CD4-positive, alpha-beta memory T cell (primary cell): ENCODE measurements at regions of chr4 and their contacts with region 1.

Region 1: DNA sequence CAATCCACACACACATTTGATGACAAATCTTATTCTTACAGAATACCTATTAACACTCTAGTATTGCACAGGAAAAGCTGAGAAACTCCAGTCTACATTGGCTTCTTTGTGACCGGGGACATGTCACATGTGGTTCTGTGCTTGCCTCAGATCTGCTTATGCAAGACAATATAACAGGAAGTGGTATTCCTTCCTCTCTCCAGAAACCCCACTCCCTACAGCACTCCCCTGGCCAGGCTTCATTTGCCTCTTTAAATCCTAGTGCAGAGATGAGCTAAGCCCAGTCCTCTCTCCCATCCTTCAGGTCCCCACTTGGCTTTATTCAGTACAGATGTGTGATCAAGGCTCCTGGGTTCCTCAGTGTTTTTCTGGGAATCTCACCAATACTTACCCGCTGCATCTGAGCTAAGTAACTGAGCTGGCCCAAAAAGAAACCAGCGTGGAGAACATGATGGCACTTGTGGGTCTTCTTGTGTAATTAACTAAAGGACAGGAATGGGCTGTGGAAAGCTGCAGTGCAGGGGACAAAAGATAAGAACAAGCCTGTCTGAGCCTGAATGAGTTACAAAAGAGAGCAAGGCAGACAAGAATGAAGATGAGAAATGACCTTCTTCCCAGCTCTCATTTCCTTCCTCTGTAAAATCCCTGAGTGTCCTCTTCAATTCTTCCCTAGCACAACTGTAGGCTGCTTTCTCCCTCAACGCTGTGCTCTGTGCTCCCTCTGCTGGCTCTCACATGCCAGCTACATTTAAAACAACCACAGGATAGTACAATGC is 105.6 kb downstream of the HNRNPD start:
- DNase-seq: peak; percentile 41 to 52 (median 47)
- H3K4me3 ChIP-seq: no peak overlapping the region
- H3K4me3 Mint-ChIP-seq: peak overlapping the region in 2 of 8 donors; percentile 5 to 61
- H3K27ac ChIP-seq: no peak overlapping the region
- H3K27ac Mint-ChIP-seq: peak overlapping the region in 2 of 7 donors; percentile 10 to 74
- H3K4me1 ChIP-seq: peaks cover 10% of the 10 kb centered on the region
- H3K4me1 Mint-ChIP-seq: peaks cover 8 to 31% (median 10%) of the 10 kb centered on the region in 4 donors
- H3K27me3 ChIP-seq: no peaks in the 10 kb centered on the region
- H3K27me3 Mint-ChIP-seq: peaks cover 2 to 9% of the 10 kb centered on the region in 2 donors

Region 2: GRCh38 chr4:81405894-81406401 is 862.3 kb before region 1 on chr4:
- CTCF ChIA-PET with region 1: interaction called, 10 read pairs
- POLR2A ChIA-PET with region 1: no interaction called
- intact Hi-C with region 1: loop called (anchors 1 kb)
- DNase-seq: peak; percentile 46 to 74 (median 70)
- H3K4me3 ChIP-seq: no peak overlapping the region
- H3K4me3 Mint-ChIP-seq: peak overlapping the region in 3 of 8 donors; percentile 0 to 52 (median 35)
- H3K27ac ChIP-seq: no peak overlapping the region
- H3K27ac Mint-ChIP-seq: no peak overlapping the region
- H3K4me1 ChIP-seq: peaks cover 6% of the 10 kb centered on the region
- H3K4me1 Mint-ChIP-seq: peaks cover 0 to 3% (median 1%) of the 10 kb centered on the region in 4 donors
- H3K27me3 ChIP-seq: no peaks in the 10 kb centered on the region
- H3K27me3 Mint-ChIP-seq: peaks cover 1 to 2% of the 10 kb centered on the region in 2 donors

Region 3: DNA sequence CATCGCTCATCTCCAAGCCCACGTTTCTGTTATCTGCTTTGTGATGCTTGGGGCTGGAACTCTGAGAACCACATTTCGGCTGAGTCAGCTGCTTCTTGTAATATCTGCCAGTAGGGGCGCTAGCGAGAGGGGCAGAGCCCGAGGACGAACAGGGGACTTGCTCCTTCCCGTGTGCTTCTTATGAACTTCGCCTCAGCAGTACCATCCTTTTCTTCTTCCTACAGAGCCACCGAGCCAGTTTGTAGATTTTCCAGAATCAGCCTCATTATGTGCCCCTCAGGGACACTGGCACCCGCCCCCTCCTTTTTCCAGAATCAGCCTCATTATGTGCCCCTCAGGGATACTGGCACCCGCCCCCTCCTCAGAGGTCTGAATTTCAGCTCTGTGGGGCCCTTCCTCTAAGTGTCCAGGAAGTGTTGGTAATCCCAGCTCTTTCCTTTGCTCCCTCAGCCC is 354.8 kb before region 1 on chr4:
- CTCF ChIA-PET with region 1: interaction called, 4 read pairs
- POLR2A ChIA-PET with region 1: no interaction called
- intact Hi-C with region 1: loop called (anchors 5 kb)
- DNase-seq: peak; percentile 39 to 55 (median 52)
- H3K4me3 ChIP-seq: no peak overlapping the region
- H3K4me3 Mint-ChIP-seq: peak overlapping the region in 1 of 8 donors; percentile 50
- H3K27ac ChIP-seq: no peak overlapping the region
- H3K27ac Mint-ChIP-seq: no peak overlapping the region
- H3K4me1 ChIP-seq: no peaks in the 10 kb centered on the region
- H3K4me1 Mint-ChIP-seq: peaks cover 6 to 9% (median 7%) of the 10 kb centered on the region in 4 donors
- H3K27me3 ChIP-seq: no peaks in the 10 kb centered on the region
- H3K27me3 Mint-ChIP-seq: peaks cover 5 to 9% of the 10 kb centered on the region in 2 donors

Region 4: GRCh38 chr4:82140440-82140839 is 127.8 kb before region 1 on chr4:
- CTCF ChIA-PET with region 1: no interaction called
- POLR2A ChIA-PET with region 1: no interaction called
- intact Hi-C with region 1: no loop called
- DNase-seq: no peak
- H3K4me3 ChIP-seq: no peak overlapping the region
- H3K4me3 Mint-ChIP-seq: no peak overlapping the region
- H3K27ac ChIP-seq: no peak overlapping the region
- H3K27ac Mint-ChIP-seq: no peak overlapping the region
- H3K4me1 ChIP-seq: peaks cover 30% of the 10 kb centered on the region
- H3K4me1 Mint-ChIP-seq: peaks cover 13 to 32% (median 21%) of the 10 kb centered on the region in 4 donors
- H3K27me3 ChIP-seq: no peaks in the 10 kb centered on the region
- H3K27me3 Mint-ChIP-seq: no peaks in the 10 kb centered on the region

Region 5: DNA sequence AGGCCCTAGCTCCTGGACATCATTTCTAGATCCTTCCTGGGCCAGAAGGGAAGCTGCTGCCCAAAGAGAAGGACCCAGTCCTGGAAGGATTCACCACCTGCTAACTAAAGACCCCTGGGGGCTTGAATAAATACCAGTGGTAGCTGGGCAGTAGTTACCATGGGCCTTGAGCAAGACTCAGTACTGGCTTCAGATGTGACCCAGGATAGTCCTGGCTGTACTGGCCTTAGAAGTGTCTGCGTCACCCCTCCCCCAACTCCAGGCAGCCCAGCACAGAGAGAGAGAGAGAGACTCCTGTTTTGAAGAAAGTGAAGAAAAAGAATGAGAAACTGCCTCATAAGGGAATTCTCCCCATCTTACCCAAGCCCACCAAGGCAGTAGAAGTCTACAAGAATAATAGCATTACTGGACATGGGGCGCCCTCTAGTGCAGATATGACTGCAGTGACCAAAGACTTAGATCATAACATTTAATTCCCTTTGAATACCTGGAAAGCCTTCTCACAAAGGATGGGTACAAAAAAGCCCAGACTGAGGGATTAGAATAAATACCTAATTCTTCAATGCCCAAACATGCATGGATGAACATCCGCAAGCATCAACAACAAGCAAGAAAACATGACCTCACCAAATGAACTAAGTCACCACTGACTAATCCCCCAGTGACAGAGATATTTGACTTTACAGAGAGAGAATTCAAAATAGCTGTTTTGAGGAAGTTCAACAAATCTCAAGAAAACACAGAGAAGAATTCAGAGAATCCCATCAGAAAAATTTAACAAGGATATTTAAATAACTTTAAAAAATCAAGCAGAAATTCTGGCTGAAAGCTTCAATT is 66.2 kb before region 1 on chr4:
- CTCF ChIA-PET with region 1: interaction called, 5 read pairs
- POLR2A ChIA-PET with region 1: no interaction called
- intact Hi-C with region 1: loop called (anchors 5 kb)
- DNase-seq: peak; percentile 39 to 52 (median 49)
- H3K4me3 ChIP-seq: no peak overlapping the region
- H3K4me3 Mint-ChIP-seq: no peak overlapping the region
- H3K27ac ChIP-seq: no peak overlapping the region
- H3K27ac Mint-ChIP-seq: no peak overlapping the region
- H3K4me1 ChIP-seq: no peaks in the 10 kb centered on the region
- H3K4me1 Mint-ChIP-seq: peaks cover 0 to 10% (median 3%) of the 10 kb centered on the region in 4 donors
- H3K27me3 ChIP-seq: no peaks in the 10 kb centered on the region
- H3K27me3 Mint-ChIP-seq: peaks cover 5 to 6% of the 10 kb centered on the region in 2 donors

Region 6: DNA sequence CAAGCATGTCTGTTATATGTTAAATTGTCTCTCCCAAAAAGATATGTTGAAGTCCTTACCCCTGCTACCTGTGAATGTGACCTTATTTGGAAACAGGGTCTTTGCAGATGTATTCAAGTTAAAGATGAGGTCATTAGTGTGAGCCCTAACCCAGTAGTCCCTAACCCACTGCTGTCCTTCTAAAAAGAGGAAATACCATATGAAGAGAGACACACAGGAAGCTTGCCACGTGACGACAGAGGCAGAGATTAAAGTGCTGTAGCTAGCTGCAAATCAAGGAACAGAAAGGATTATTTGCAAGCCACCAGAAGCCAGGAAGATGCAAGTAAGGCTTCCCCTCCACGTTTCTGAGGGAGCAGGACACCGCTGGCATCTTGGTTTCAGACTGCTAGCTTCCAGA is 44.5 kb before region 1 on chr4:
- CTCF ChIA-PET with region 1: interaction called, 8 read pairs
- POLR2A ChIA-PET with region 1: no interaction called
- intact Hi-C with region 1: loop called (anchors 1 kb)
- DNase-seq: peak; percentile 25 to 46 (median 30)
- H3K4me3 ChIP-seq: no peak overlapping the region
- H3K4me3 Mint-ChIP-seq: peak overlapping the region in 7 of 8 donors; percentile 5 to 80 (median 58)
- H3K27ac ChIP-seq: no peak overlapping the region
- H3K27ac Mint-ChIP-seq: peak overlapping the region in 2 of 7 donors; percentile 14 to 39
- H3K4me1 ChIP-seq: peaks cover 14% of the 10 kb centered on the region
- H3K4me1 Mint-ChIP-seq: peaks cover 4 to 11% (median 7%) of the 10 kb centered on the region in 4 donors
- H3K27me3 ChIP-seq: no peaks in the 10 kb centered on the region
- H3K27me3 Mint-ChIP-seq: peaks cover 4 to 5% of the 10 kb centered on the region in 2 donors

Region 7: GRCh38 chr4:82360298-82361177 is 92.3 kb after region 1 on chr4:
- CTCF ChIA-PET with region 1: interaction called, 18 read pairs
- POLR2A ChIA-PET with region 1: no interaction called
- intact Hi-C with region 1: no loop called
- DNase-seq: peak in 4 of 5 donors; percentile 39 to 42 (median 40)
- H3K4me3 ChIP-seq: no peak overlapping the region
- H3K4me3 Mint-ChIP-seq: peak overlapping the region in 5 of 8 donors; percentile 3 to 54 (median 17)
- H3K27ac ChIP-seq: peak overlapping the region; percentile 22
- H3K27ac Mint-ChIP-seq: peak overlapping the region; percentile 30 to 88 (median 62)
- H3K4me1 ChIP-seq: peaks cover 98% of the 10 kb centered on the region
- H3K4me1 Mint-ChIP-seq: peaks cover 59 to 94% (median 77%) of the 10 kb centered on the region in 4 donors
- H3K27me3 ChIP-seq: no peaks in the 10 kb centered on the region
- H3K27me3 Mint-ChIP-seq: no peaks in the 10 kb centered on the region

Region 8: GRCh38 chr4:82428969-82429727 is 160.9 kb after region 1 on chr4:
- CTCF ChIA-PET with region 1: no interaction called
- POLR2A ChIA-PET with region 1: no interaction called
- intact Hi-C with region 1: no loop called
- DNase-seq: peak; percentile 90 to 96 (median 93)
- H3K4me3 ChIP-seq: peak overlapping the region; percentile 66 to 73
- H3K4me3 Mint-ChIP-seq: peak overlapping the region; percentile 98 to 100 (median 100)
- H3K27ac ChIP-seq: peak overlapping the region; percentile 99
- H3K27ac Mint-ChIP-seq: peak overlapping the region; percentile 97 to 100 (median 100)
- H3K4me1 ChIP-seq: peaks cover 64% of the 10 kb centered on the region
- H3K4me1 Mint-ChIP-seq: peaks cover 41 to 83% (median 59%) of the 10 kb centered on the region in 4 donors
- H3K27me3 ChIP-seq: no peaks in the 10 kb centered on the region
- H3K27me3 Mint-ChIP-seq: no peaks in the 10 kb centered on the region

Region 9: GRCh38 chr4:82968972-82969371 is 700.7 kb after region 1 on chr4:
- CTCF ChIA-PET with region 1: no interaction called
- POLR2A ChIA-PET with region 1: no interaction called
- intact Hi-C with region 1: no loop called
- DNase-seq: no peak
- H3K4me3 ChIP-seq: no peak overlapping the region
- H3K4me3 Mint-ChIP-seq: no peak overlapping the region
- H3K27ac ChIP-seq: no peak overlapping the region
- H3K27ac Mint-ChIP-seq: peak overlapping the region in 1 of 7 donors; percentile 64
- H3K4me1 ChIP-seq: no peaks in the 10 kb centered on the region
- H3K4me1 Mint-ChIP-seq: peaks cover 0 to 3% (median under 1%) of the 10 kb centered on the region in 4 donors
- H3K27me3 ChIP-seq: no peaks in the 10 kb centered on the region
- H3K27me3 Mint-ChIP-seq: no peaks in the 10 kb centered on the region